Cardiac septum (tissue), 1 donor: ENCODE measurements at regions of chr3 and their contacts with region 1.

Region 1: GRCh38 chr3:29280404-29281093 is at the start of gene RBMS3:
- DNase-seq: peak; percentile 89
- total RNA-seq, gene RBMS3: 49.0 TPM

Region 2: DNA sequence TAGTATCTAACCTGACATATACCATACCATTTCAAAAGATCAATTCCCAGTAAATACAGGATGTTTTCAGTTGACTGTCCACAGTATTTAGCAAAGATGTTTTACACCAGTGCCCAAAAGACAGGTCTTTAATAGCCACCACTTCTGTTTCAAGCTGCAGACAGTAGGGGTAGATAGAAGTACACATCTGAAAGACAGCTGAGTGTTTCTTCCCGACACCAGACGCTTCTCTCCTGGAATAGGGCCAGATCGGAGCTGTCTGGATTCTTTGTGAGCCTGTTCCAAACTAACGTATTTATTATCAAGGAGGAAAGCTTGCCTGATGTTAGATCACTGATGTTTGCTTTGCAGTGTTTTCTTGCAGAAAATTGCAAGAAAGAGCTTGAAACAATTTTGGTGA is 135.7 kb before region 1 on chr3:
- intact Hi-C with region 1: loop called (anchors 5 kb)
- DNase-seq: no peak

Region 3: DNA sequence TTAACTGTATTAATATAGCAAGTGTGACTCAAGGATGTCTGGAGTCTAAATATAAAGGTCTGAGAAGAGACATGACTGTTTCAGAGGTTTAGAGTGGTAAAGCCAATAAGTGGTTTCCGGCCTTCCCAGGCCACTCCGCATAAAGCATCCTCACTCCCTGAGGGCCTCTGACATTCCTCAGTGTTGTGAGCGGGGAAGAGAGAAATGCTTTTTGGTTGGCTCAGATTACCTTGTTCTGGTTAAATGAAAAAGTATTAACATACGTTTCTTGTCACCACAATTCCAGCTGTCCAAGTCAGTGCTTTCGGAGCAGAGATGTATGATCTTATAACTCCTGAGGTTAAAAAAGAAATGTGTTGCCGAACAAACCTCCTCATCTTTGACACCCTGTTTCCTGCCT is 104.1 kb after region 1 on chr3:
- intact Hi-C with region 1: loop called (anchors 5 kb)
- DNase-seq: no peak

Region 4: GRCh38 chr3:29525254-29525881 is 244.8 kb after region 1 on chr3:
- intact Hi-C with region 1: loop called (anchors 2 kb)
- DNase-seq: no peak

Region 5: GRCh38 chr3:29683018-29683993 is 402.8 kb after region 1 on chr3:
- intact Hi-C with region 1: loop called (anchors 2 kb)
- DNase-seq: no peak